CD4-positive, alpha-beta T cell (primary cell): ENCODE measurements at regions of chr15 and their contacts with region 1.

Region 1: GRCh38 chr15:65516997-65517865 is at the start of gene DPP8:
- DNase-seq: peak; percentile 89 to 96 (median 93)
- ATAC-seq: peak; percentile 94
- H3K4me3 ChIP-seq: peak within 1 kb of the TSS; percentile 92
- H3K4me3 Mint-ChIP-seq: peak within 1 kb of the TSS; percentile 95
- H3K27ac ChIP-seq: peak within 1 kb of the TSS; percentile 86
- H3K27ac Mint-ChIP-seq: peak within 1 kb of the TSS; percentile 87
- H3K4me1 ChIP-seq: peaks cover 22% of the 10 kb centered on the region
- H3K4me1 Mint-ChIP-seq: peaks cover 51% of the 10 kb centered on the region
- H3K27me3 ChIP-seq: no peaks in the 10 kb centered on the region
- H3K27me3 Mint-ChIP-seq: no peaks in the 10 kb centered on the region
- CTCF ChIP-seq: peak; percentile 91
- total RNA-seq, gene DPP8: 41.2 to 45.4 TPM

Region 2: DNA sequence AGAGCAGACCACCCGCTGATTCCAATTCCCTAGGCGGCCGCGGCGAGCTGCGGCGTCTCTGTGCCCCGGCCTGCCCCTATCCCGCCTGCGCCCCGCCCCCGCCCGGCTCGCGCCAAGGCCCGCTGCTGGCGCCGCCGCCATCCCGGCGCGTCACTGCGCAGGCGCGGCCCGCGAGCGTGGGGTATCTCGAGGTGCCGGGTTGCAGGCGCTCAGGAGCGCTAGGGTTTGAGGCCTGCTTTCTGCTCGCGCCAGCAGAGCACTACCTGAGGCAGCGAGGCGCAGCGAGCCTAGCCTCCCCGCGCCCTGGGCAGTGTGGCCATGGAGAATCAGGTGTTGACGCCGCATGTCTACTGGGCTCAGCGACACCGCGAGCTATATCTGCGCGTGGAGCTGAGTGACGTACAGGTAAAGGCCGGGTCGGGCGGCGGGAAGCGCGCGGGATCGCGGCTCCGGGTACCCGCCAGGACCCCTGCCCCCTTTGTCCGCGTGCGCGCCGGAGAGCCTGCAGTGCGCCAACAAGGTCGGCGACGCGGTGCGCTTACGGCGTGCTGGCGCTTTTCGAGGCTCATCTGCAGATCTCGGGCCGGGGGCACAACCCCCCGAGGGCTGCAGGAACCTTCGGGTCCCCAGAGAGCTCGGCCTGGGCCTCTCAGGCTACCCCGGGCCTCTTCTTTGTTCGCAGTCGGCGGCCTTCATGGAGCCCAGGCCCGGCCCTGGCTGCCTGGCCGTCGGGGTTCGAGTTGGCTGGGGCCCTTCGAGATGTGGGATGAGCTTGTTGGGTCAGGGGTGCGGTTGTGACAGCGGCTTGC is 13.3 kb after region 1 on chr15 and contains the start of gene HACD3:
- CTCF ChIA-PET with region 1: interaction called, 5 read pairs
- POLR2A ChIA-PET with region 1: interaction called, 21 read pairs
- intact Hi-C with region 1: loop called (anchors 1 kb)
- DNase-seq: peak; percentile 78 to 94 (median 88)
- ATAC-seq: peak; percentile 95
- H3K4me3 ChIP-seq: peak within 1 kb of the TSS; percentile 88
- H3K4me3 Mint-ChIP-seq: peak within 1 kb of the TSS; percentile 87
- H3K27ac ChIP-seq: peak within 1 kb of the TSS; percentile 50 to 74
- H3K27ac Mint-ChIP-seq: peak within 1 kb of the TSS; percentile 49
- H3K4me1 ChIP-seq: peaks cover 18% of the 10 kb centered on the region
- H3K4me1 Mint-ChIP-seq: peaks cover 35% of the 10 kb centered on the region
- H3K27me3 ChIP-seq: no peaks in the 10 kb centered on the region
- H3K27me3 Mint-ChIP-seq: no peaks in the 10 kb centered on the region
- CTCF ChIP-seq: no peak
- total RNA-seq, gene HACD3: 13.9 to 14.1 TPM

Region 3: GRCh38 chr15:65610871-65611718 is 93.9 kb after region 1 on chr15 and contains the start of gene INTS14:
- CTCF ChIA-PET with region 1: interaction called, 3 read pairs
- POLR2A ChIA-PET with region 1: interaction called, 7 read pairs
- intact Hi-C with region 1: loop called in 1 of 2 experiments (anchors 1 kb)
- DNase-seq: peak; percentile 81 to 96 (median 89)
- ATAC-seq: peak; percentile 94
- H3K4me3 ChIP-seq: peak within 1 kb of the TSS; percentile 77
- H3K4me3 Mint-ChIP-seq: peak within 1 kb of the TSS; percentile 99
- H3K27ac ChIP-seq: peak within 1 kb of the TSS; percentile 88 to 92
- H3K27ac Mint-ChIP-seq: peak within 1 kb of the TSS; percentile 93
- H3K4me1 ChIP-seq: peaks cover 28% of the 10 kb centered on the region
- H3K4me1 Mint-ChIP-seq: peaks cover 41% of the 10 kb centered on the region
- H3K27me3 ChIP-seq: no peaks in the 10 kb centered on the region
- H3K27me3 Mint-ChIP-seq: no peaks in the 10 kb centered on the region
- CTCF ChIP-seq: peak; percentile 59
- total RNA-seq, gene INTS14: 20.6 to 25.1 TPM